Caco-2 (cell line): ENCODE measurements at regions of chr14 and their contacts with region 1.

Region 1: GRCh38 chr14:95380350-95381042 is 60.8 kb upstream of the CLMN start:
- DNase-seq: no peak
- H3K4me3 ChIP-seq: no peak overlapping the region
- H3K4me3 Mint-ChIP-seq: no peak overlapping the region
- H3K27ac Mint-ChIP-seq: no peak overlapping the region
- H3K4me1 ChIP-seq: peaks cover 25% of the 10 kb centered on the region
- H3K4me1 Mint-ChIP-seq: peaks cover 10% of the 10 kb centered on the region
- H3K27me3 ChIP-seq: no peaks in the 10 kb centered on the region
- H3K27me3 Mint-ChIP-seq: no peaks in the 10 kb centered on the region
- CTCF ChIP-seq: no peak

Region 2: GRCh38 chr14:95346820-95347219 is 33.7 kb before region 1 on chr14:
- CTCF ChIA-PET with region 1: no interaction called
- POLR2A ChIA-PET with region 1: no interaction called
- intact Hi-C with region 1: loop called (anchors 5 kb)
- DNase-seq: no peak
- H3K4me3 ChIP-seq: no peak overlapping the region
- H3K4me3 Mint-ChIP-seq: no peak overlapping the region
- H3K27ac Mint-ChIP-seq: no peak overlapping the region
- H3K4me1 ChIP-seq: no peaks in the 10 kb centered on the region
- H3K4me1 Mint-ChIP-seq: peaks cover 8% of the 10 kb centered on the region
- H3K27me3 ChIP-seq: no peaks in the 10 kb centered on the region
- H3K27me3 Mint-ChIP-seq: no peaks in the 10 kb centered on the region
- CTCF ChIP-seq: no peak